Activated B cell treated with CpG ODN at 0.5 μM for 24 hours (primary cell): ENCODE measurements at regions of chr11 and their contacts with region 1.

Region 1: GRCh38 chr11:134223836-134224709 is at the starts of genes NCAPD3 and VPS26B:
- DNase-seq: peak; percentile 89
- ATAC-seq: peak; percentile 80
- H3K4me3 Mint-ChIP-seq: peak within 1 kb of the TSS; percentile 93
- H3K27ac Mint-ChIP-seq: peak within 1 kb of the TSS; percentile 97
- H3K4me1 Mint-ChIP-seq: peaks cover 45% of the 10 kb centered on the region
- H3K27me3 Mint-ChIP-seq: peaks cover 7% of the 10 kb centered on the region
- CTCF ChIP-seq: no peak
- total RNA-seq, gene NCAPD3: 22.2 and 22.7 TPM in 2 replicates
- total RNA-seq, gene VPS26B: 8.9 and 11.4 TPM in 2 replicates

Region 2: GRCh38 chr11:134068829-134069425 is 155.1 kb before region 1 on chr11 and contains the start of gene JAM3:
- CTCF ChIA-PET with region 1: no interaction called
- POLR2A ChIA-PET with region 1: interaction called, 6 read pairs
- intact Hi-C with region 1: loop called (anchors 1 kb)
- DNase-seq: peak; percentile 99
- ATAC-seq: peak; percentile 88
- H3K4me3 Mint-ChIP-seq: peak within 1 kb of the TSS; percentile 95
- H3K27ac Mint-ChIP-seq: peak within 1 kb of the TSS; percentile 90
- H3K4me1 Mint-ChIP-seq: peaks cover 42% of the 10 kb centered on the region
- H3K27me3 Mint-ChIP-seq: peaks cover 11% of the 10 kb centered on the region
- CTCF ChIP-seq: no peak
- total RNA-seq, gene JAM3: 16.2 and 17.6 TPM in 2 replicates

Region 3: DNA sequence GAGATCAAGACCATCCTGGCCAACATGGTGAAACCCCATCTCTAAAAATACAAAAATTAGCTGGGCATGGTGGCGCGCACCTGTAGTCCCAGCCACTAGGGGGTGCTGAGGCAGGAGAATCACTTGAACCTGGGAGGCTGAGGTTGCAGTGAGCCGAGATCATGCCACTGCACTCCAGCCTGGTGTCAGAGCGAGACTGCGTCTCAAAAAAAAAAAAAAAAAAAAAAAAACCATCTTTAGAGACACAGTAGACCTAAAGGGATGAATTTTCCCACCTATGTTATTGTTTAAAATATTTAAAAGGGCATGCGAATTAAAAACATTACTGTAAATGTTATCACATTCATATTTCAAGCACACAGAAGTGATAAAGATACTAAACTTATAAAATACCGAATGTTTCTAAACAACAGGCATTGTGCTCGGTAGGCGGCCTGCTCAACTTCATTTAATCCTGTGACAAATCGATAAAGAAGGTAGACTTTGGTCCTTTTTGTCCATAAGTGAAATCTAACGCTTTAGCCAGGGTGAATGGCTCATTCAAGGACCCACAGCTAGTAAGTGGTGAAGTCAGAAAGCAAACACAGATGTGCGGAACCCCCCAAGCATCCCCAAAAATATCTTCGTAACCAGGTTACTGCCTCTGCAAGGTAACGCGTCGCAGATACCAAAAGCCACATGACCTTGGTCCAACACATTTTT is 16.4 kb before region 1 on chr11:
- CTCF ChIA-PET with region 1: interaction called, 9 read pairs
- POLR2A ChIA-PET with region 1: no interaction called
- intact Hi-C with region 1: loop called (anchors 1 kb)
- DNase-seq: peak; percentile 40
- ATAC-seq: no peak
- H3K4me3 Mint-ChIP-seq: no peak overlapping the region
- H3K27ac Mint-ChIP-seq: no peak overlapping the region
- H3K4me1 Mint-ChIP-seq: no peaks in the 10 kb centered on the region
- H3K27me3 Mint-ChIP-seq: no peaks in the 10 kb centered on the region
- CTCF ChIP-seq: peak; percentile 39

Region 4: DNA sequence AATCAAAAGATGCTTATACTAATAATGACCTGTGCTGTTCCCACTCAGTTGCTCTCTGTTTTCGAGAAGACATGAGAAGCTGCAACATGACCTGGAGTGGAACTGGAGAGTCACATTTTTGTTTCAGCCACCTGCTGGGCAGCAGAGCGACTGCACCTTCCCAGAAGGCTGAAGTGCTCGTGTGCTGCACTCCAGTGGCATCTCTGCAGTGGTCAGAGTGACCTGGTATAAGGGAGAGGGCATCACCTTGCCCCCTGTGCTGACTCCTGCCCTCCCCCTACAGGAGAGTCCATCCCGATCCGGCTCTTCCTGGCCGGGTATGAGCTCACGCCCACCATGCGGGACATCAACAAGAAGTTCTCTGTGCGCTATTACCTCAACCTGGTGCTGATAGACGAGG is 20.6 kb after region 1 on chr11:
- CTCF ChIA-PET with region 1: interaction called, 15 read pairs
- POLR2A ChIA-PET with region 1: interaction called, 7 read pairs
- intact Hi-C with region 1: loop called (anchors 1 kb)
- DNase-seq: no peak
- ATAC-seq: peak; percentile 84
- H3K4me3 Mint-ChIP-seq: no peak overlapping the region
- H3K27ac Mint-ChIP-seq: no peak overlapping the region
- H3K4me1 Mint-ChIP-seq: no peaks in the 10 kb centered on the region
- H3K27me3 Mint-ChIP-seq: no peaks in the 10 kb centered on the region
- CTCF ChIP-seq: no peak

Region 5: DNA sequence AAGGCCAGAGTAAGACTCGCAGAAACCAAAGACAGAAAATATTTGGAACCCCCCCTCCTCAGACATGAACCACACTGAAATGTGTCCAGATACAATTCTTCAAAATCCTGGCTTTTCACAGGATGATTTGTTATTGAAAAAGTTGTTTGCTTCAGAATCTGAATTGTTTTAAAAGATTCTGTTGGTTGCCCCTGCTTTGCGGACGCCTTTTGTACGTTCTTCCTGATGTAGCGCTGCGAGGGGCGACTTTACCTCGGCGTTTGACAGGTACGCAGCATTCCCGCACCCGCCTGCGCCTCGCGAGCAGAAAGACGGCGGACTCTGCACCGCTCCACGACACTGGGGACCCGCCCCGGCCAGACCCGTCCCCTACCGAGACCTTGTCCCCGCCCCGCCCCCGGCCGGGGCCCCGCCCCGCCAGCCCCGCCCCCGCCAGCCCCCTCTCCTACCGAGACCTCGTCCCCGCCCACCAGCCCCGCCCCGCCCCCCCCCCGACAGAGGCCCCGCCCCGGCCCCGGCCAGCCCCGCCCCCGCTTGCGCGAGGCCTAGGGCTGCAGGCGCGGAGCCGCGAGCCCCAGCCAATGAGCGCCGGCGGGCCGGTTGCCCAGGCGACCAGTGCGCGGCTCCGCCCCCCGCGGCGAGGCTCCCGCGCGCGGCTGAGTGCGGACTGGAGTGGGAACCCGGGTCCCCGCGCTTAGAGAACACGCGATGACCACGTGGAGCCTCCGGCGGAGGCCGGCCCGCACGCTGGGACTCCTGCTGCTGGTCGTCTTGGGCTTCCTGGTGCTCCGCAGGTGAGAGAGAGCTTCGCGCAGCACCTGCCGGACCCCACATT is 107.5 kb after region 1 on chr11 and contains the start of gene GLB1L2:
- CTCF ChIA-PET with region 1: no interaction called
- POLR2A ChIA-PET with region 1: interaction called, 6 read pairs
- intact Hi-C with region 1: loop called (anchors 1 kb)
- DNase-seq: peak; percentile 69
- ATAC-seq: peak; percentile 96
- H3K4me3 Mint-ChIP-seq: peak within 1 kb of the TSS; percentile 80
- H3K27ac Mint-ChIP-seq: no peak within 1 kb of the TSS
- H3K4me1 Mint-ChIP-seq: peaks cover 9% of the 10 kb centered on the region
- H3K27me3 Mint-ChIP-seq: peaks cover 48% of the 10 kb centered on the region
- CTCF ChIP-seq: no peak
- total RNA-seq, gene GLB1L2: 0.33 and 0.56 TPM in 2 replicates